ENCODE measurements at regions of chr13 and their contacts with region 1.

Region 1: DNA sequence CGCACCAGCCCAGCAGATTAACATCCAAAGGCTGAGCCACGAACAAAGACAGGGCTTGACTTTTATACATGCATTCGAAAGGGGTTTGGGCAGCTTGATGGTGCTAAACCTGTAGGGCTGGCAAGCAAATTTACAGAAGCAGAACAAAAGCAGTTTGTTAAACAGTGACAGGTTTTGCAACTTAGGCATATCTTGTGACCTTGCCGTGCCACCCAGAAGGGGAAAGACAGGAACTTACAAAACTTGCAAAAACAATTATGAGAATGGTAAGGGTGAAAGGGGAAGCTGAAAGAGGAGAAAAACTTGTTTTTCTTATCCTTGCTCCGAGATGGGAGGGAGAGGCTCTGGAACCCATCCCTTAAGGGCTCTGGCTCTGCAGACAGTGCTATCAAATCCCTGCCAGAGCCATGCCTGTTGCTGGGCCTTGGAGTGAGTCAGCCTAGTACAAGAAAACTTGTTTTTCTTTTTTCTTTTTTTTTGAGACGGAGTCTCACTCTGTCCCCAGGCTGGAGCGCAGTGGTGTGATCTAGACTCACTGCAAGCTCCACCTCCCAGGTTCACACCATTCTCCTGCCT is 1325.2 kb upstream of the PRR20A start:
- DNase-seq: no peak
- ATAC-seq: no peak

Region 2: GRCh38 chr13:56299650-56300049 is 484.1 kb after region 1 on chr13:
- intact Hi-C with region 1: loop called (anchors 10 kb)
- DNase-seq: no peak
- ATAC-seq: no peak